Panc1 (cell line): ENCODE measurements at regions of chr3 and their contacts with region 1.

Region 1: DNA sequence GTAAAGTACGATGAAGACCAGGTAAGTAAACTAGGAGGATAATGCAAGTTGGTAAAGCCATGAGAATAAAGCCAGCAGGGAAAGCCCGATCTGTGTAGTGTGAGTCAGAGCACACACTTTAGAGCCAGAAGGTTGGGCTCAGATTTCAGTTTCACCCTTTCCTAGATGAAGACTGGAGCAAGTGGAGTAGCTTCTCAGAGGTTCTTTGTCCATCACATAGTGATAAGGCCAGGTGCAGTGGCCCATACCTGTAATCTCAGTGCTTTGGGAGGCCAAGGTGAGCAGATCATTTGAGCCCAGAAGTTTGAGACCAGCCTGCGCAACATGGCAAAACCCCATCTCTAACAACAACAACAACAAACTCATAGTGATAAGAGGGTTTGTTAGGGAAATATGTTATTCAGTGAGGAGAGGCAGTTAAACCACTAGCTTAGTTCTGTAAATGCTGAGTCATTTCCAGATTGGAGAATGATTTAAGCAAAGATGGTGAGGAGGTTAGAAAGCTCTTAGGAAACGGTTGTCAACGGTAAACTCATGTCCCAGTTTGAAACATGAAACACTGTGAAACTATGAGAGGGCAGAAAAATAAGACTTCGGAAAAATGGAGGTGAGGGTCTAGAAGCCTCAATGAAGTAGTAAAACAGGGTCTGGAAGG is 39.0 kb downstream of the IL12A start:
- DNase-seq: no peak
- ATAC-seq: peak; percentile 50; the same call in 1 of the 2 replicates
- H3K4me3 ChIP-seq: no peak overlapping the region
- H3K27ac ChIP-seq: no peak overlapping the region
- H3K4me1 ChIP-seq: no peaks in the 10 kb centered on the region
- H3K27me3 ChIP-seq: no peaks in the 10 kb centered on the region
- CTCF ChIP-seq: no peak

Region 2: GRCh38 chr3:160081968-160082533 is 54.4 kb after region 1 on chr3:
- CTCF ChIA-PET with region 1: no interaction called
- POLR2A ChIA-PET with region 1: no interaction called
- in situ Hi-C with region 1: no loop called
- intact Hi-C with region 1: no loop called
- DNase-seq: no peak
- ATAC-seq: no peak
- H3K4me3 ChIP-seq: no peak overlapping the region
- H3K27ac ChIP-seq: no peak overlapping the region
- H3K4me1 ChIP-seq: no peaks in the 10 kb centered on the region
- H3K27me3 ChIP-seq: no peaks in the 10 kb centered on the region
- CTCF ChIP-seq: no peak

Region 3: GRCh38 chr3:160224256-160224655 is 196.6 kb after region 1 on chr3:
- CTCF ChIA-PET with region 1: no interaction called
- POLR2A ChIA-PET with region 1: no interaction called
- in situ Hi-C with region 1: no loop called
- intact Hi-C with region 1: loop called (anchors 5 kb)
- DNase-seq: no peak
- ATAC-seq: no peak
- H3K4me3 ChIP-seq: no peak overlapping the region
- H3K27ac ChIP-seq: no peak overlapping the region
- H3K4me1 ChIP-seq: 0 out of 2 replicates have a peak, but pooled peaks cover 3% of the 10 kb centered on the region
- H3K27me3 ChIP-seq: peaks cover 54% of the 10 kb centered on the region
- CTCF ChIP-seq: no peak

Region 4: DNA sequence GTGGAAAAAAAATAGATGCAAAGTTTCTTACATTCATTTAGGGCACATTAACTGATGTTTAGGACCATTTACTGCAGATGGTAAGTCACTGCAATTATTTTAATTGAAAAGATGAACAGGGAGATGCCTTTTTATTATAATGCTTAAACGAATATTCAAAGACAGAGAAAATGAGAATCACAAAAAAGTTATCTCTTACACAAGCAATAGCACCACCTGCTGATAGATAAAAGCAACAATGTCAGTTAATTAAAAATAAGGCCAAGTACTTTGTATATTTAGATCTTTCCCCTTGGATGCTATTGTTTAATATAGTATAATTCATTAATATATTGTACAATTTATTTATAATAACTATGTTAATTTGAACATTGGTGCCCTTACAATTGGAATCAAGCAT is 315.5 kb after region 1 on chr3:
- CTCF ChIA-PET with region 1: interaction called, 10 read pairs
- POLR2A ChIA-PET with region 1: no interaction called
- in situ Hi-C with region 1: no loop called
- intact Hi-C with region 1: loop called (anchors 2 kb)
- DNase-seq: no peak
- ATAC-seq: no peak
- H3K4me3 ChIP-seq: no peak overlapping the region
- H3K27ac ChIP-seq: no peak overlapping the region
- H3K4me1 ChIP-seq: no peaks in the 10 kb centered on the region
- H3K27me3 ChIP-seq: no peaks in the 10 kb centered on the region
- CTCF ChIP-seq: peak; percentile 47; the same call in 1 of the 2 replicates

Region 5: GRCh38 chr3:160413613-160414248 is 386.1 kb after region 1 on chr3:
- CTCF ChIA-PET with region 1: no interaction called
- POLR2A ChIA-PET with region 1: no interaction called
- in situ Hi-C with region 1: no loop called
- intact Hi-C with region 1: loop called (anchors 5 kb)
- DNase-seq: no peak
- ATAC-seq: peak; percentile 76
- H3K4me3 ChIP-seq: no peak overlapping the region
- H3K27ac ChIP-seq: no peak overlapping the region
- H3K4me1 ChIP-seq: no peaks in the 10 kb centered on the region
- H3K27me3 ChIP-seq: no peaks in the 10 kb centered on the region
- CTCF ChIP-seq: peak; percentile 85; the same call in 1 of the 2 replicates